Ovary (tissue), 10 donors: ENCODE measurements at regions of chr12 and their contacts with region 1.

Region 1: DNA sequence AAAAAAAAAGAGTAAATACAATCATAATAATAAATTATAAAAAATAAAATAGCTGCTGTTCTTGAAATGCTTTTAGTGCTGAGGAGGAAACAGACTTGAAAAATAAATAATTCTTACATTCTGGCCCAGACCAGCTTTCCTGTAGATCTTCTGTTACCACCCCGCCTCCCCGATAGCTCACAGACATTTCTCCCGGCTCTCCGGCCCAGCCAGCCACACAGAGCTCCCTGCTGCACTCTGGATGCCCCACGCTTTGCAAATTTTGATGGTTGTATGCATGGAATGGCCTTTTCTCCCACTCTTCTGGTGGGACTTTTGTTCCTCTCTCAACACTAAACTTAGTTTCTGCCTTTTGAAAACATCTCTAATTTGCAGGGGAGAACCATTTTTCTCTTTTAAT is 249.3 kb downstream of the ATP23 start:
- DNase-seq: no peak
- H3K4me3 ChIP-seq: no peak overlapping the region
- H3K27ac ChIP-seq: no peak overlapping the region
- H3K4me1 ChIP-seq: no peaks in the 10 kb centered on the region
- H3K27me3 ChIP-seq: no peaks in the 10 kb centered on the region
- CTCF ChIP-seq: no peak
- EP300 ChIP-seq: no peak
- POLR2A ChIP-seq: no peak

Region 2: GRCh38 chr12:58067599-58068387 is 122.8 kb before region 1 on chr12:
- intact Hi-C with region 1: no loop called
- DNase-seq: no peak
- H3K4me3 ChIP-seq: no peak overlapping the region
- H3K27ac ChIP-seq: no peak overlapping the region
- H3K4me1 ChIP-seq: no peaks in the 10 kb centered on the region
- H3K27me3 ChIP-seq: no peaks in the 10 kb centered on the region
- CTCF ChIP-seq: no peak
- EP300 ChIP-seq: no peak
- POLR2A ChIP-seq: no peak

Region 3: GRCh38 chr12:58247638-58248037 is 57.0 kb after region 1 on chr12:
- intact Hi-C with region 1: no loop called
- DNase-seq: no peak
- H3K4me3 ChIP-seq: no peak overlapping the region
- H3K27ac ChIP-seq: no peak overlapping the region
- H3K4me1 ChIP-seq: no peaks in the 10 kb centered on the region
- H3K27me3 ChIP-seq: no peaks in the 10 kb centered on the region
- CTCF ChIP-seq: no peak
- EP300 ChIP-seq: no peak
- POLR2A ChIP-seq: no peak

Region 4: DNA sequence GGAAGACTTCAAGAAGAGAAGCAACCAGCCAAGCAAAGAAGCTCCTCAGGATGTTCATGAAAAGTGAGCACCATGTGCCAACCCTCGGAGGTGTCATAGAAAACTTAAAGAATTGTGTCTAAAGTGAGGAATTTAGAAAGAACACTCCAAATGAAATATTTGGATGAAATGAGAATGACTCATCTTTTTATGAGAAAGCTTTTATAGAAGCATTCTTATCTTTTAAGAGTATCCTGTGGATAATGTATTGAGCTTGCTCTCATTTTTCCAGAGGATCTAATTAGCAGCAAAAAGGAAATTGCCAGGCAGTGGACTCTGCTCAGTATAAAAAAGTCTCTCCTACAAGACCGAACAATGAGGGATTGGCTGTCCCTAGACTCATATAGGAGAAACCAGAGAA is 274.8 kb after region 1 on chr12:
- intact Hi-C with region 1: loop called in 1 of 4 experiments (anchors 10 kb)
- DNase-seq: no peak
- H3K4me3 ChIP-seq: no peak overlapping the region
- H3K27ac ChIP-seq: no peak overlapping the region
- H3K4me1 ChIP-seq: no peaks in the 10 kb centered on the region
- H3K27me3 ChIP-seq: no peaks in the 10 kb centered on the region
- CTCF ChIP-seq: no peak
- EP300 ChIP-seq: no peak
- POLR2A ChIP-seq: no peak

Region 5: DNA sequence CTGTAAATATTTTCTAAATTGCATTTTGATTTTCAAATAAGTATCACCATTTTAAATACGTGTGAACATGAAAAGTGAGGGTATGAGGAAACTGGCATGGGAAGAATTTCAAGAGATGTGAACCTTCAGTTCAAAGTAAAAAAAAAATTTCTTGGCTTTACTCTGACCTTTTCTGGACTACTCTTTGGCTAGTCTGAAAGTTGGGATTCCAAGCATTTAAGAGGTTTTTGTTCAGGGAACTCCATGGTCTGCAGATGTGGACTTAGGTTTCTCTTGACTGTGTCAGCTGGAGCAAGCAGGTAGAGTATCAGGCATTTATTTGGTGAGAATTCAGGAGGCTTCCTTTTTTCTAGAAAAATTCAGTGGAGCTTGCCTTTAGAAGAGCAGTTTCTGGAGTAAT is 418.1 kb after region 1 on chr12:
- intact Hi-C with region 1: no loop called
- DNase-seq: no peak
- H3K4me3 ChIP-seq: no peak overlapping the region
- H3K27ac ChIP-seq: no peak overlapping the region
- H3K4me1 ChIP-seq: no peaks in the 10 kb centered on the region
- H3K27me3 ChIP-seq: no peaks in the 10 kb centered on the region
- CTCF ChIP-seq: no peak
- EP300 ChIP-seq: no peak
- POLR2A ChIP-seq: no peak